Activated CD8-positive, alpha-beta T cell treated with anti-CD3 and anti-CD28 coated beads for 36 hours (primary cell): ENCODE measurements at regions of chr4 and their contacts with region 1.

Region 1: DNA sequence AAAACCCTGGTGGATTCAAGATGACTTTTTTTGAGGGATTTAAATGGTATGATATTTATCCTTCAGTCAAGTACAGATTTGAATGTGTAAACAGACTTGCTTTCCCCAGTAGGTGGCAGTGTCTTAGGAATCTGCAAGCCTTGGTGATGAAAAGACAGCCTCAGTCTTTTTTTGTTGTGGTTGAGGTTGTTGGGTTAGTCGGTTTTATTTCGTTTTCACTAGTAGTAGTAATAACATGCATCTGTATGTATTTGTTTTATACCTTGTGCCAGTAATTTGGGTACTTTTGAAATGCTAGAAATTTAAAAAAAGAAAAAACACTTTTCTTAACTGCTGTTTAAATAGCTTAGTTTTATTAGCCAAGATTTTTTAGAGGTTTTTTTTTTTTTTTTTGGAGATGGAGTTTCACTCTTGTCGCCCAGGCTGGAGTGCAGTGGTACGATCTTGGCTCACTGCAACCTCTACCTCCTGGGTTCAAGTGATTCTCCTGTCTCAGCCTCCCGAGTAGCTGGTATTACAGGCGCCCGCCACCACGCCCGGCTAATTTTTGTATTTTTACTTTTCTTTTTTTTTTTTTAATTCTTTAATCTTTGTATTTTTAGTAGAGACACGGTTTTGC is 39.2 kb downstream of the COPS4 start:
- DNase-seq: peak; percentile 67
- ATAC-seq: peak; percentile 91
- H3K4me3 Mint-ChIP-seq: peak overlapping the region; percentile 45
- H3K27ac Mint-ChIP-seq: peak overlapping the region; percentile 47
- H3K4me1 Mint-ChIP-seq: peaks cover 5% of the 10 kb centered on the region
- H3K27me3 Mint-ChIP-seq: no peaks in the 10 kb centered on the region
- CTCF ChIP-seq: peak; percentile 75

Region 2: DNA sequence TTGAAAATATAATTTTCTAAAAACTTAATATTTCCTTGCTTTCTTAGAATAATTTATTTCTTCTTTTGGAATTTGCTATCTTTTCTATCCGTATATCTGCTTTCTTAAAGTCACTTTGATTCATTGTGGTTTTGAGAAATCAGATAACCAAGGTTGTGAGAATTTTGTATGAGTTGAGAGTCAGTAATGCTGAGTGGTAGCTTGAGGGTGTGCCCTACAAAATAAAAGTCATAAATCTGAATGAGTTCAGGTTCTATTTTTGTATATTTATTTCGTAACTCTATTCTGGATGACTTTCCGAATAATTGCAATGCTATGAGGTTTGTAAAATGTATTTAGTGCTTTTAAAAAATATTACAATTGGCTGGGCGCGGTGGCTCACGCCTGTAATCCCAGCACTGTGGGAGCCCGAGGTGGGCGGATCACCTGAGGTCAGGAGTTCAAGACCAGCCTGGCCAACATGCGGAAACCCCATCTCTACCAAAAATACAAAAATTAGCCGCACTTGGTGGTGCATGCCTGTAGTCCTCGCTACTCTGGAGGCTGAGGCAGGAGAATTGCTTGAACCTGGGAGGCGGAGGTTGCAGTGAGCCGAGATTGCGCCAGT is 30.3 kb before region 1 on chr4:
- CTCF ChIA-PET with region 1: interaction called, 3 read pairs
- POLR2A ChIA-PET with region 1: no interaction called
- intact Hi-C with region 1: loop called (anchors 1 kb)
- DNase-seq: no peak
- ATAC-seq: no peak
- H3K4me3 Mint-ChIP-seq: no peak overlapping the region
- H3K27ac Mint-ChIP-seq: no peak overlapping the region
- H3K4me1 Mint-ChIP-seq: peaks cover 24% of the 10 kb centered on the region
- H3K27me3 Mint-ChIP-seq: no peaks in the 10 kb centered on the region
- CTCF ChIP-seq: no peak

Region 3: DNA sequence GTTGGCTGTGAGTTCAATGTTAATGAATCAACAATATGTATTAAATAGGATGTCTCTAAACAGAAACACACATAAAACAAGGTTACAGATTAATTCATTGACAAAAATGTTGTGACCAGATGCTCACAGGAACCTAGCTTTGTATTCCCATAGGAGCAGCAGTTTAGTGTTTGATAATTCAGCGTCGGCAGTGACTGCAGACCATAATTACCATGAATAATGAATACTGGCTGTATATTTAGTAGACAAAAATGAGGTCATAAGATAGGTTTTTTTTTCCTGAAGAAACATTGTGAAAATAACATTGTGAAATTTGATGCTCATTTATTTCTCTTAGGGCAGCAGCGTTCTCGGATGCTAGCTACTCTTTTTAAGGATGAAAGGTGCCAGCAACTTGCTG is 11.5 kb before region 1 on chr4:
- CTCF ChIA-PET with region 1: interaction called, 12 read pairs
- POLR2A ChIA-PET with region 1: interaction called, 7 read pairs
- intact Hi-C with region 1: no loop called
- DNase-seq: no peak
- ATAC-seq: no peak
- H3K4me3 Mint-ChIP-seq: no peak overlapping the region
- H3K27ac Mint-ChIP-seq: no peak overlapping the region
- H3K4me1 Mint-ChIP-seq: no peaks in the 10 kb centered on the region
- H3K27me3 Mint-ChIP-seq: no peaks in the 10 kb centered on the region
- CTCF ChIP-seq: no peak

Region 4: GRCh38 chr4:83195269-83195668 is 121.1 kb after region 1 on chr4:
- CTCF ChIA-PET with region 1: no interaction called
- POLR2A ChIA-PET with region 1: no interaction called
- intact Hi-C with region 1: no loop called
- DNase-seq: no peak
- ATAC-seq: no peak
- H3K4me3 Mint-ChIP-seq: no peak overlapping the region
- H3K27ac Mint-ChIP-seq: no peak overlapping the region
- H3K4me1 Mint-ChIP-seq: peaks cover 7% of the 10 kb centered on the region
- H3K27me3 Mint-ChIP-seq: no peaks in the 10 kb centered on the region
- CTCF ChIP-seq: no peak

Region 5: DNA sequence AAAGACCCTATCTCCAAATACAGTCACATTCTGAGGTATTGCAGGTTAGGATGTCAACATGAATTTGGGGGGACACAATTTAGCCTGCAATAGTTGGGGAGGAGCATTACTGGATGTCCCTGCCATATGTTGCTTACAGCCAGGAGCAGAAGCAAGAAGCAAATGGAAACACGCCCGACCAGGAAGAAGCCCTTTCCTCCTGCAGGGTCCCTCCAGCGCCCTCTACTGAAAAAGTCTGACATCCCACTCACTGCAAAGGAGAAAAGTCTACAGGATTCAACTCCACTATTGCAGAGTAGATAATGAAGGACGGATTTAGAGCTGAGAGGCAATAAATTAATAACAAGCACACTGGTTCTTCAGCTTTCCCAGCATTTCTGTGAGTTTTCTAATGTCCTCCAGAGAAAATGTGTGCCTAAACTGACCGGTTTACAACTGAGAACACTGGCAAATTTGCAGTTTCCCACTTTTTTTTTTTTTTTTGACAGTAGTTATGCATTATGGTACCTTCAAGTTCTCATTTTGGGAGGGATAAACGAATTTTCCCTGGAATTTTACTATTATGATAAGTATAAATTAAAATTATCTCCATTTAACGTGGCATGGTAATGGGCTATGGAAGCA is 178.7 kb after region 1 on chr4:
- CTCF ChIA-PET with region 1: interaction called, 38 read pairs
- POLR2A ChIA-PET with region 1: interaction called, 6 read pairs
- intact Hi-C with region 1: loop called (anchors 2 kb)
- DNase-seq: peak; percentile 84
- ATAC-seq: peak; percentile 88
- H3K4me3 Mint-ChIP-seq: no peak overlapping the region
- H3K27ac Mint-ChIP-seq: no peak overlapping the region
- H3K4me1 Mint-ChIP-seq: peaks cover 21% of the 10 kb centered on the region
- H3K27me3 Mint-ChIP-seq: no peaks in the 10 kb centered on the region
- CTCF ChIP-seq: peak; percentile 90

Region 6: GRCh38 chr4:83259586-83259985 is 185.4 kb after region 1 on chr4:
- CTCF ChIA-PET with region 1: interaction called, 38 read pairs
- POLR2A ChIA-PET with region 1: interaction called, 3 read pairs
- intact Hi-C with region 1: no loop called
- DNase-seq: no peak
- ATAC-seq: no peak
- H3K4me3 Mint-ChIP-seq: no peak overlapping the region
- H3K27ac Mint-ChIP-seq: no peak overlapping the region
- H3K4me1 Mint-ChIP-seq: peaks cover 2% of the 10 kb centered on the region
- H3K27me3 Mint-ChIP-seq: no peaks in the 10 kb centered on the region
- CTCF ChIP-seq: no peak

Region 7: GRCh38 chr4:83267121-83267829 is 193.1 kb after region 1 on chr4:
- CTCF ChIA-PET with region 1: interaction called, 20 read pairs
- POLR2A ChIA-PET with region 1: no interaction called
- intact Hi-C with region 1: no loop called
- DNase-seq: no peak
- ATAC-seq: no peak
- H3K4me3 Mint-ChIP-seq: no peak overlapping the region
- H3K27ac Mint-ChIP-seq: no peak overlapping the region
- H3K4me1 Mint-ChIP-seq: peaks cover 11% of the 10 kb centered on the region
- H3K27me3 Mint-ChIP-seq: no peaks in the 10 kb centered on the region
- CTCF ChIP-seq: no peak